ENCODE measurements at regions of chr19 and their contacts with region 1.

Region 1: GRCh38 chr19:13060964-13061927 is 41.4 kb downstream of the LYL1 start:
- DNase-seq: peak; percentile 61 to 86 (median 82)
- ATAC-seq: peak; percentile 98
- H3K4me3 ChIP-seq: peak overlapping the region; percentile 48 to 71
- H3K4me3 Mint-ChIP-seq: peak overlapping the region; percentile 82
- H3K27ac ChIP-seq: no peak overlapping the region
- H3K27ac Mint-ChIP-seq: no peak overlapping the region
- H3K4me1 ChIP-seq: peaks cover 8% of the 10 kb centered on the region
- H3K4me1 Mint-ChIP-seq: peaks cover 8% of the 10 kb centered on the region
- H3K27me3 ChIP-seq: peaks cover 0 to 2% of the 10 kb centered on the region in 2 experiments
- H3K27me3 Mint-ChIP-seq: peaks cover 13% of the 10 kb centered on the region
- CTCF ChIP-seq: peak; percentile 96

Region 2: GRCh38 chr19:12974301-12975220 is 86.7 kb before region 1 on chr19:
- CTCF ChIA-PET with region 1: interaction called, 201 read pairs
- POLR2A ChIA-PET with region 1: interaction called, 3 read pairs
- intact Hi-C with region 1: loop called (anchors 1 kb)
- DNase-seq: no peak
- ATAC-seq: no peak
- H3K4me3 ChIP-seq: no peak overlapping the region
- H3K4me3 Mint-ChIP-seq: no peak overlapping the region
- H3K27ac ChIP-seq: no peak overlapping the region
- H3K27ac Mint-ChIP-seq: no peak overlapping the region
- H3K4me1 ChIP-seq: no peaks in the 10 kb centered on the region
- H3K4me1 Mint-ChIP-seq: no peaks in the 10 kb centered on the region
- H3K27me3 ChIP-seq: peaks cover 0 to 15% of the 10 kb centered on the region in 2 experiments
- H3K27me3 Mint-ChIP-seq: peaks cover 16% of the 10 kb centered on the region
- CTCF ChIP-seq: no peak

Region 3: DNA sequence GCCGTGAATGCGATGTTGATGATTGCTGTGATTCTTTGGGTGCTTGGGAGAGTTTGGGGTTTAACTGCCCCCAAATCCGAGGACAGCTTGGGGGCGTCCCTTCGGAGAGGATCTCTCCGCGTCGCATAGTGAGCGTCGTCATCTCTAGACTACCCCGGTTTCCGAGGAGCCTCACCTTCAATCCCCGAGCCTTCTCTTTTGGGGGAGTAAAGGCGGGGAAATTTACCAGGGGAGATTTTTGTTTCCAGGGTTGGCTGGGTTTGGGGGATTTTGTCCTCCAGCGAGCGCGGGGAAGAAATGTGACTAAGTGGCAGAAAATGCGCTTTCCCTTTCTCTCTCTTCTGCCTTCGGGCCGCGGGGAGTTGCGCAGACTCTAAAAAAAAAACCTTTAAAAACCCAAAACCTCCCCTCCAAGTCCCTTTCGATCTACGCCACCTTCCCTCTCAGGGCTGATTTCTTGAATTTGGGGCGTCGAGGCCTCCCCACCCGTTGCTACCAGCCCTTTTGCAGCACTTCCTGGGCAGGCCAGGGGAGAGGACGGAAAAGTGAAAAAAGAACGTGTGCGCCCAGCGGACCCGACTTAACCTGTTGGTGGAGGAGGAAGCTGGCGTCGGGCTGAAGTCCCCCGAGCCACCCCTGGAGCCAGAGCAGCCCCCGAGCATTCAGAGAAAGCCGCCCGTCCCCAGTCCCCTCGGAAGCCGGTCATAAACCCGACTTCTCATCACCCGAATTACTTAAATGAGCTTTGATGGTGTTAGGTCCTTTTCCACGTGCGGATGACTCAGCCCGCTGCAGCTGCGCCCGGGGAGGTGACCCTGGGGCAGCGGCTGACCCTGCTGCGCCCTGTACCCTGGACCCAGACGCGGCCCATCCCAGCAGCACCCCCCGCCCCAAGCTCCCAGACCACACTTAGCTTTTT is 48.3 kb before region 1 on chr19:
- CTCF ChIA-PET with region 1: interaction called, 15 read pairs
- POLR2A ChIA-PET with region 1: interaction called, 3 read pairs
- intact Hi-C with region 1: no loop called
- DNase-seq: peak in 6 of 9 experiments; percentile 23 to 64 (median 46)
- ATAC-seq: peak; percentile 62
- H3K4me3 ChIP-seq: peak overlapping the region; percentile 43 to 44
- H3K4me3 Mint-ChIP-seq: peak overlapping the region; percentile 87
- H3K27ac ChIP-seq: no peak overlapping the region
- H3K27ac Mint-ChIP-seq: peak overlapping the region; percentile 10
- H3K4me1 ChIP-seq: peaks cover 31% of the 10 kb centered on the region
- H3K4me1 Mint-ChIP-seq: peaks cover 25% of the 10 kb centered on the region
- H3K27me3 ChIP-seq: peaks cover 34 to 53% of the 10 kb centered on the region in 2 experiments
- H3K27me3 Mint-ChIP-seq: peaks cover 73% of the 10 kb centered on the region
- CTCF ChIP-seq: no peak

Region 4: GRCh38 chr19:13044231-13044836 is 16.9 kb before region 1 on chr19:
- CTCF ChIA-PET with region 1: interaction called, 10 read pairs
- POLR2A ChIA-PET with region 1: interaction called, 7 read pairs
- intact Hi-C with region 1: no loop called
- DNase-seq: peak; percentile 29 to 92 (median 58)
- ATAC-seq: peak; percentile 82
- H3K4me3 ChIP-seq: no peak overlapping the region
- H3K4me3 Mint-ChIP-seq: peak overlapping the region; percentile 27
- H3K27ac ChIP-seq: peak overlapping the region; percentile 42 to 74
- H3K27ac Mint-ChIP-seq: peak overlapping the region; percentile 87
- H3K4me1 ChIP-seq: peaks cover 36% of the 10 kb centered on the region
- H3K4me1 Mint-ChIP-seq: peaks cover 29% of the 10 kb centered on the region
- H3K27me3 ChIP-seq: no peaks in the 10 kb centered on the region
- H3K27me3 Mint-ChIP-seq: no peaks in the 10 kb centered on the region
- CTCF ChIP-seq: no peak

Region 5: DNA sequence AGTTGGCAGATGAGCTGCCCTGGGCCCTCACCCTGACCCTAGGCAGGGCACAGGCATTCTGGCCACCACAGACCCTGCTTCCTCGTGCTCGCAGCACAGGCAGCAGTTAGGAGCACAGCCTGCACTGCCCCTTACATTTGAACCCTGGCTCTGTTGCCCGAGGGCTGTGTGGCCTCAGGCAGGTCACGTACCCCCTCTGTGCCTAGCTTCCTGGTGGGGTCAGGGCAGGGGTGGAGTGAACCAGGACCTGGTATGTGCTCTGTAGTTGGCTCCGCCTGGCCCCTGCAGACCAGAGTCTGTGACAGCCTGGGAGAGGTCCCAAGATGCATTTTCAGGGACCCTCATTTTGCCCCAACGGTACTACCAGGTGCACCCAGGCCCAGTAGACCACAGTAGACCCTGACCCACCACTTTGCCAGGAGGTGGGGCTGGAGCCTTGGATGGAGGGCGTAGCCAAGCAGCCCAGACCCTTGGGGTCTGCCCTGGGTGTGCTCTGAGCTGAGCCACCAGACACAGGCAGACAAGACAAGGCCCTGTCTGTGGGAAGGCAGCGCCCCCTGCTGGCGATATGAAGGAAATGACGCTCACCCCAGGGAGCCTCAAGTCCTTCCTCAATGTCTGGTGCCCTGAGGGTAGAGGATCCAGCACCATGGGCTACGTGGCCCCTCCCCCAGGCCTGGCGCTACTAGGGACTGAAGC is 32.3 kb after region 1 on chr19:
- CTCF ChIA-PET with region 1: interaction called, 57 read pairs
- POLR2A ChIA-PET with region 1: no interaction called
- intact Hi-C with region 1: loop called (anchors 1 to 2 kb)
- DNase-seq: peak; percentile 55 to 88 (median 80)
- ATAC-seq: peak; percentile 74
- H3K4me3 ChIP-seq: no peak overlapping the region
- H3K4me3 Mint-ChIP-seq: no peak overlapping the region
- H3K27ac ChIP-seq: no peak overlapping the region
- H3K27ac Mint-ChIP-seq: no peak overlapping the region
- H3K4me1 ChIP-seq: peaks cover 29% of the 10 kb centered on the region
- H3K4me1 Mint-ChIP-seq: peaks cover 18% of the 10 kb centered on the region
- H3K27me3 ChIP-seq: peaks cover 16 to 28% of the 10 kb centered on the region in 2 experiments
- H3K27me3 Mint-ChIP-seq: peaks cover 21% of the 10 kb centered on the region
- CTCF ChIP-seq: peak; percentile 92

Region 6: DNA sequence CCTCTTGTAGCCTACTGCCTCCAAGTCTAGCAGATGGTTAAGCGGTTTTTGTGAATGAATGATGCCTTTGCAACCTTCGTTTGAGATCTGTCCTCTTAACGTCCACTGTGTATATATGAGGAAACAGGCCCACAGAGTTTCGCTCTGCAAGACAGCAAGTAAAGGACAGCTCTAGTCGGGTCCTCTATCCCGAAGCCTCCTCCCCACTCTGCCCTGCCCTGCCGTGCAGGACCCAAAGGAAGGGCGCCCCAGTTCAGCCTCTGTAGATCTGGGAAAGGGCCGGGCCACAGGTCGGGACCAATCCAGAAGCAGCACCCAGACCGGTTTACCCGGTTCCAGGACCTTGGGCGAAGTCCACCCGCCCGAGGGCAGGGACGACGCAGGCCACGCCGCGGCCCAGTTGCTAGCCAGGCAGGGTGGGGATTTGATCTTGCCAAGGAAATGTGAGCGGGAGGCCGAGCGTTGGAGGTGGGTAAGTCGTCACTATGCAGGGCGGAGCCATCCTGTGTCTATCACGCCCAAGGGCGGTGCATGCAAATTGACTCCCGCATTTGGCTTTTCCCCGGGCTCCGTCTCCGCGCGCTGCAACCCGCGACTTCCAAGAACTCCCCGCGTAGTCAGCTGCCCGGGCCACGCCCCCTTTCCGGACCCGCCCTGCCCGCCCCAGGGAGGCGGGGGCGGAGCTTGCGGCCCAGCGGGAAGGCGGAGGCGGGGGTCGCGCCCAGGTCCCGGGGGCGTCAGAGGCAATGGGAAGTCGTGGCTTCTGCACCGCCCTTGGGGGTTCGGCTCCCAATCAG is 101.5 kb after region 1 on chr19:
- CTCF ChIA-PET with region 1: no interaction called
- POLR2A ChIA-PET with region 1: no interaction called
- intact Hi-C with region 1: no loop called
- DNase-seq: peak; percentile 40 to 93 (median 82)
- ATAC-seq: peak; percentile 49
- H3K4me3 ChIP-seq: peak overlapping the region; percentile 56 to 58
- H3K4me3 Mint-ChIP-seq: peak overlapping the region; percentile 85
- H3K27ac ChIP-seq: peak overlapping the region; percentile 68 to 86
- H3K27ac Mint-ChIP-seq: peak overlapping the region; percentile 96
- H3K4me1 ChIP-seq: peaks cover 72% of the 10 kb centered on the region
- H3K4me1 Mint-ChIP-seq: peaks cover 67% of the 10 kb centered on the region
- H3K27me3 ChIP-seq: no peaks in the 10 kb centered on the region
- H3K27me3 Mint-ChIP-seq: no peaks in the 10 kb centered on the region
- CTCF ChIP-seq: no peak